ENCODE measurements at regions of chr9 and their contacts with region 1.

Region 1: DNA sequence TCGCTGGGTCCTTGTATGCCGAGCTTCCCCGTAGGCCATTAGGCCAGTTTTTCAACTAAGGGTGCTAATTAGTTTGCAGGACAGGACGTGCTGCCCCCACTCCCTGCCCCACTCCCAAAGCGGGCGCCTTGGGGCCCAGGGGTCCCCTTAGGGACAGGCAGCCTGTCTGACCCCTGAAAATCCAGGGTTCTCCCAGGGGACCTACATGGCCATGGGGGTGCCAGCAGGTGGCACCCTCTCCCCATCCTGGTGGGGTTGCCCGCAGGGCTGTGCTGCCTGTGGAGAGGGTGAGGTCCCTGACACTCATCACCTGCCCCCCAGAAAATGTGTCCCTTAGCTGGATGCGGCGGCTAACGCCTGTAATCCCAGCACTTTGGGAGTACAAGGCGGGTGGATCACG is 8.5 kb upstream of the CCDC187 start:
- DNase-seq: no peak

Region 2: GRCh38 chr9:136378170-136379002 is 66.0 kb after region 1 on chr9:
- CTCF ChIA-PET with region 1: interaction called, 11 read pairs
- POLR2A ChIA-PET with region 1: no interaction called
- DNase-seq: no peak

Measured in HEK293T (cell line).